Endothelial cell of umbilical vein (primary cell): ENCODE measurements at regions of chr20 and their contacts with region 1.

Region 1: DNA sequence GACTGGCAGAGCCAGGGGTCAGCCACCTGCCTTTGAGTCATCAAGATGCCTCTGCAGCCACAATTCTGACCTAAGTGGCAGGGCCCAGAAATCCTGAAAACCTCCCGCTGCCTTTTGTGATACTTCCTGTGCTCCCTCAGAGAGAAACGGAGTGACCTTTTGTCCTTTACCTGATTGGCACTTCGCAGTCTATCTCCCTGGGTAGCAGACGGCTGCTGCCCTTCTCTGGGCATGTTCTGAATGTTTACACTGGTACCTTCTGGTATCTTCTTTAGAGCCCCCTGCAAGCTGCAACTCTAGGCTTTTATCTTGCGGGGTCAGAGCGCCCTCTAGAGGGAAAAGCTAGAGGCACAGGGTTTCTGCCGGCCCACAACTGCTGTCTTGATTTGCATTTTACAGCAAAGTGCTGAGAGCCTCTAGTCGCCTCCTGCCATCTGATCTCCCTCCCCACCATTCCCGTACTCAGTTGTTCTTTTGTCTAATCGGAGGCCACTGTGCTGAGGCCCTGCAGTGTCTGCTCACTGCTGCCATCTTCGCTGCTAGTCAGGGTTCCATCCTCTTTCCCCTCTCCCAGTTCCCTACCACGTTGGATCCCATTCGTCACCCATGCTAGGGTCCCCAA is 26.9 kb downstream of the SPATA2 start:
- DNase-seq: peak; percentile 73
- H3K4me3 ChIP-seq: no peak overlapping the region
- H3K27ac ChIP-seq: no peak overlapping the region
- H3K4me1 ChIP-seq: peaks cover 20% of the 10 kb centered on the region
- H3K27me3 ChIP-seq: no peaks in the 10 kb centered on the region
- CTCF ChIP-seq: peak; percentile 80 to 88
- POLR2A ChIP-seq: no peak

Region 2: DNA sequence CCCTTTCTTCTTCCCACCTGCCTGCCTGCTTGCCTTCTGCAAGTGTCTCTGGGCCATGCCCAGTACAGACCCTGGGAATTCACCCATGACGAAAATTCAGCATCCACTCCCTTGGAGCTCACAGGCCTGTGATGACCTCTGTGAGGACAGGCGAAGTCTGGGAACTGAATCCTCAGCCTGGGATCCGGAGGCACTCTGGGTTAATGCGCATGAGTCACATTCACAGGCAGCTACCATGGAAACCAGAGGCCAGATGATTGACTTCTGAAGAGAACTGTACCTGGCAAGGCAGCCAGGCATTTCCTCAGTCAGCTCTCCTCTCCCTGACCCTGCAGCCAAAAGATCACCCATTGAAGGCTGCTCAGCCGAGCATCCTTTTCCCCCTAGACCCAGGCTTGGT is 34.8 kb before region 1 on chr20:
- CTCF ChIA-PET with region 1: interaction called, 10 read pairs
- POLR2A ChIA-PET with region 1: no interaction called
- dilution Hi-C with region 1: no loop called
- intact Hi-C with region 1: no loop called
- DNase-seq: peak; percentile 61
- H3K4me3 ChIP-seq: no peak overlapping the region
- H3K27ac ChIP-seq: peak overlapping the region; percentile 19
- H3K4me1 ChIP-seq: no peaks in the 10 kb centered on the region
- H3K27me3 ChIP-seq: no peaks in the 10 kb centered on the region
- CTCF ChIP-seq: no peak
- POLR2A ChIP-seq: no peak

Region 3: DNA sequence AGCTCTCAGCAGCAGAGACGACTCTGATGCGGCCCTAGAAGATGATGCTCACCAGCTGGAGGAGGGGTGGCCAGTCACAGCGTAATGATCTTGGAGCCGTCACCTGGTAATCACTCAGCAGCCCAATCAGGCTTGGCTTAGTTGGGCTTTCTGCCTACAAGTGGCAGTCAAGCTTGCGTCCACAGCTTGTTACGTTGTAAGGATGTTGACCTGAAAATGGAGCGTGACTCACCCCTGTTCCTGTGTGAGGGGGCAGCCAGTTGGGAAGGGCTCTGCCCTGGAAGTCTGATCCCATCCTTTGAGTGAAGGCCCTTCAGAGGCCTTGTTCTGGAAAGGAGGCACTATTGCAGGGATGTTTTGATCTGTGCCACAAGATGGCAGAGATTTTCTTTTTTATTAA is 22.9 kb before region 1 on chr20:
- CTCF ChIA-PET with region 1: interaction called, 17 read pairs
- POLR2A ChIA-PET with region 1: no interaction called
- dilution Hi-C with region 1: no loop called
- intact Hi-C with region 1: no loop called
- DNase-seq: no peak
- H3K4me3 ChIP-seq: no peak overlapping the region
- H3K27ac ChIP-seq: no peak overlapping the region
- H3K4me1 ChIP-seq: no peaks in the 10 kb centered on the region
- H3K27me3 ChIP-seq: no peaks in the 10 kb centered on the region
- CTCF ChIP-seq: no peak
- POLR2A ChIP-seq: no peak

Region 4: GRCh38 chr20:49901588-49901987 is 13.1 kb after region 1 on chr20:
- CTCF ChIA-PET with region 1: interaction called, 60 read pairs
- POLR2A ChIA-PET with region 1: no interaction called
- dilution Hi-C with region 1: no loop called
- intact Hi-C with region 1: no loop called
- DNase-seq: no peak
- H3K4me3 ChIP-seq: no peak overlapping the region
- H3K27ac ChIP-seq: no peak overlapping the region
- H3K4me1 ChIP-seq: no peaks in the 10 kb centered on the region
- H3K27me3 ChIP-seq: no peaks in the 10 kb centered on the region
- CTCF ChIP-seq: no peak
- POLR2A ChIP-seq: no peak

Region 5: DNA sequence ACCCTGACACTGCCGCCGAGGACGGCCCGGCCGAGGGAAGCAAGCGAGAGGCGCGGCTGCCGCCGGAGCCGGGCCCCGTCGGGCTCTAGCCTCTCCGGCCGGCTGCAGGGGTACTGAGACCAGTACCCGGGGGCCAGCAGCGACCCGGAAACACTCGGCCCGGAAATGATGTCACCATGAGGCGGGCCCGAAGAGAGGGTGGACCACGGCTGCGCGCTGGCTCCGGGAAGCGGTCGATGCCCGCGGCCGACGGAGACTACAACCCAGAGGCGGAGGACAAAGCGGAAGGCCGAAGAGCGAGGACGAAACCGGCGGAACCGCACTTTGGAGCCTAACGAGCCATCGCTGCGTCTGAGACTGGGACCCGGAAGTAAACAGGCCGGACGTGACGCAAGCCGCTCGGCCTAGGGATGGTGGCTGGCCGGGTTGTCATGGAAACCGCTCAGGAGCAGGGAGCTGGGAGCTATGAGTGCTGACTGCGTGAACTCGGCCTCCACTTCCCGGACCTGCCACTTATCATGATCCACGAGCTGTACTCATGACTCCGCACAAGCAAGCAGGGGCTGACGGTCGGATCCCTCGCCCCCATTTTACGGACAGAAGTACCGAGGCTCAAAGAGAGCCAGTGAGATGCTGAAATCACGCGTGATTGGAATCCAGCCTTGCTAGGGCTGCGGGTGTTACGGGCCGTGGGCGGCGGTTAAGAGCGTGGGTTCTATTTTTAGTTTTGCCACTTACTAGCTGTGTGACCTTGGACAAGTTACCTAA is 27.1 kb after region 1 on chr20 and contains the start of gene SPATA2:
- CTCF ChIA-PET with region 1: interaction called, 14 read pairs
- POLR2A ChIA-PET with region 1: no interaction called
- dilution Hi-C with region 1: no loop called
- intact Hi-C with region 1: no loop called
- DNase-seq: peak; percentile 94
- H3K4me3 ChIP-seq: peak within 1 kb of the TSS; percentile 54 to 89 (median 68)
- H3K27ac ChIP-seq: peak within 1 kb of the TSS; percentile 86
- H3K4me1 ChIP-seq: peaks cover 17% of the 10 kb centered on the region
- H3K27me3 ChIP-seq: no peaks in the 10 kb centered on the region
- CTCF ChIP-seq: no peak
- POLR2A ChIP-seq: peak; percentile 83
- total RNA-seq, gene SPATA2: 6.1 TPM in 2 replicates

Region 6: DNA sequence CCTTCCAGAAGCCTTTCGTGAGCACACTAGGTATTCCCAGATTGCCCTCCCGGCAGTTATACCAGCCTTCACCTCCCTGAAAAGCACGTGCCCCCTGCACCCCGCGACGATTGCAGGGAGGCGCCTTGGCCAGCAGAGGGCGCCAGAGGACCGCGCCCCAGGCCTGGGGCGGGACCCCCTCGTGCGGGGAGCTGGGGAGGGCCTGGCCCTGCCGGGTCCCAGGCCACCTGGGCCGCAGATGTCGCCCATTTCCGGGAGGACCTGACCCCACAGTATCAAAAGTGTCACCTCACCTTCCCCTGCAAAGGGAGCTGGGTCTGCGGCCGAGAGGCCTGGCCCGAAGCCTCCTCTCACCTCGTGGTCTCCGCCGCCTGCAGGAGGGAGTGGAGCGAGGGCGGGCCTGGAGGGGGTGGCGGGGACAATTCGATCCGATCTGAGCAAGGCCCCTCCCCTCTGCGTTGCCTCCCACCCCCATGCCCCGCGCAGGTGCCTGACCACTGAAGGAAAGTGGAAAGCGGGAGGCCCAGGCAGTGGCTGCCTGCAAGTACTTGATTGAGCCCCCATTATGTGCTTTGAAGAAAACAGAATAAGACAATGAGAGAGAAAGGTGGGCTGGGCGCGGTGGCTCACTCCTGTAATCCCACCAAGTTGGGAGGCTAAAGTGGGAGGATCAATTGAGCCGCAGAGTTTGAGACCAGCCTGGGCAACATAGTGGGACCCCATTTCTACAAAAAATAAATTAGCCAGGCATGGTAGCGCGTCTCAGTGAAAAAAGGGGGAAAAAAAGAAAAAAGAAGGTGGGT is 90.8 kb after region 1 on chr20:
- CTCF ChIA-PET with region 1: no interaction called
- POLR2A ChIA-PET with region 1: no interaction called
- dilution Hi-C with region 1: no loop called
- intact Hi-C with region 1: no loop called
- DNase-seq: peak; percentile 48
- H3K4me3 ChIP-seq: peak overlapping the region in 1 of 3 experiments; percentile 26
- H3K27ac ChIP-seq: no peak overlapping the region
- H3K4me1 ChIP-seq: peaks cover 16% of the 10 kb centered on the region
- H3K27me3 ChIP-seq: no peaks in the 10 kb centered on the region
- CTCF ChIP-seq: peak; percentile 97 to 98
- POLR2A ChIP-seq: no peak